ENCODE measurements at regions of chr6 and their contacts with region 1.

Region 1: DNA sequence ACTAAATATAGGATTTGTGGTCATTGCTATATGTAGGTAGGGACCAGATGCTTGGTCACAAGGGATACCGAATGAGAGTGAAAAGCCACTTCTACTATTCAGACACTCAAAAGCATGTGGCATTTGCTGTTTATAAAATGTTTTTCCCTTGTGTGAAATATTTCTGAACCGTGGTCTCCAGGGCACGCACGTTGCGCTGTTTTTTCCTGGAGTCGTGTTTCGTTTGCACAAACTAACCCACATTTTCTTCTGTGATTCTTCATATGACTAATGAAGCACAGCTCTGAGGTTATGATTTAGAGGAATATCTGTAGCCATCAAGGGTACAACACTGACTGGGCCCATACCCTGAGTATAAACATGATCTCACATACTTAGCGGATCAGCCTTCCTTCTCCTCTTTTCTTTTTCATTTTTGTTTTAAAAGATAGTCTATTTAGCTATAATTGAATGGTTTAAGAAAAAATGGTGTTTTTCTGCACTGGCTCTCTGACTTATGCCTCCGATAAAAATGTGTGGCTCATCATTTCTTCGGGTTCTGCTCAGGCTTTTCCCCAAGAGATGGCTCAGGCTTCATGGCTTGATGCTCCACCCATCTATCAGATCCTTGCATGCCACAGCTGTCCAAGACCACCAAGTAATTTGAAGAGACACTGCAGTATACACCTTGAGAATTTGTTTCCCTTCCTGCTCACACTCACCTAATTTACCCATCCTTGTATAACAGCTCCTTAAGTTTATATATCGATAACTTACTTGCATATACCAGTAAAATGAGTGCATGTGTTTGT is 59.9 kb upstream of the HBS1L start:
- DNase-seq: peak; percentile 75
- H3K4me3 Mint-ChIP-seq: no peak overlapping the region
- H3K27ac Mint-ChIP-seq: peak overlapping the region; percentile 74
- H3K4me1 Mint-ChIP-seq: peaks cover 72% of the 10 kb centered on the region
- H3K27me3 Mint-ChIP-seq: no peaks in the 10 kb centered on the region

Region 2: GRCh38 chr6:133724726-133725125 is 1389.8 kb before region 1 on chr6:
- CTCF ChIA-PET with region 1: no interaction called
- intact Hi-C with region 1: no loop called
- DNase-seq: no peak
- H3K4me3 Mint-ChIP-seq: no peak overlapping the region
- H3K27ac Mint-ChIP-seq: no peak overlapping the region
- H3K4me1 Mint-ChIP-seq: no peaks in the 10 kb centered on the region
- H3K27me3 Mint-ChIP-seq: no peaks in the 10 kb centered on the region

Region 3: DNA sequence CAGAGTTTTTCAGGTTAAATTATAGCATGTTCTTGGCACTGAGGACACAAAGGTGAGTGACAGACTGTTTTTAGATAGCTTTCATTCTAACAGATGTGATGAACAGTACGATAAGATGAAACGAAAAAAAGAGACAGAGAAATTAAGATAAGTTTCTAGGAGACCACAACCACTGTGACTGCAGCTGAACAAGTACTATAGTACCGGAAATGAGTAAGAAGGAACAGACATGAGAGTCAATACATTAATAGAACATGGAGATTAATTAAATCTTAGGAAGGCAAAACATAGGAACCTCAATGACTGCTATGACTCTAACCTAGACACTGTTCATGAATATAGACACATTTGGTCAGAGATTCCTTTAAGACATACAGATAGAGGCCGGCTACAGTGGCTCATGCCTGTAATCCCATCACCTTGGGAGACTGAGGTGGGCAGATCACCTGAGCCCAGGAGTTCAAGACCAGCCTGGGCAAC is 100.2 kb before region 1 on chr6:
- CTCF ChIA-PET with region 1: no interaction called
- intact Hi-C with region 1: loop called (anchors 1 kb)
- DNase-seq: peak; percentile 24
- H3K4me3 Mint-ChIP-seq: peak overlapping the region; percentile 2
- H3K27ac Mint-ChIP-seq: no peak overlapping the region
- H3K4me1 Mint-ChIP-seq: peaks cover 60% of the 10 kb centered on the region
- H3K27me3 Mint-ChIP-seq: no peaks in the 10 kb centered on the region

Region 4: GRCh38 chr6:135030056-135030473 is 84.5 kb before region 1 on chr6:
- CTCF ChIA-PET with region 1: no interaction called
- intact Hi-C with region 1: loop called (anchors 1 kb)
- DNase-seq: peak; percentile 18
- H3K4me3 Mint-ChIP-seq: peak overlapping the region; percentile 10
- H3K27ac Mint-ChIP-seq: peak overlapping the region; percentile 71
- H3K4me1 Mint-ChIP-seq: peaks cover 63% of the 10 kb centered on the region
- H3K27me3 Mint-ChIP-seq: no peaks in the 10 kb centered on the region

Region 5: DNA sequence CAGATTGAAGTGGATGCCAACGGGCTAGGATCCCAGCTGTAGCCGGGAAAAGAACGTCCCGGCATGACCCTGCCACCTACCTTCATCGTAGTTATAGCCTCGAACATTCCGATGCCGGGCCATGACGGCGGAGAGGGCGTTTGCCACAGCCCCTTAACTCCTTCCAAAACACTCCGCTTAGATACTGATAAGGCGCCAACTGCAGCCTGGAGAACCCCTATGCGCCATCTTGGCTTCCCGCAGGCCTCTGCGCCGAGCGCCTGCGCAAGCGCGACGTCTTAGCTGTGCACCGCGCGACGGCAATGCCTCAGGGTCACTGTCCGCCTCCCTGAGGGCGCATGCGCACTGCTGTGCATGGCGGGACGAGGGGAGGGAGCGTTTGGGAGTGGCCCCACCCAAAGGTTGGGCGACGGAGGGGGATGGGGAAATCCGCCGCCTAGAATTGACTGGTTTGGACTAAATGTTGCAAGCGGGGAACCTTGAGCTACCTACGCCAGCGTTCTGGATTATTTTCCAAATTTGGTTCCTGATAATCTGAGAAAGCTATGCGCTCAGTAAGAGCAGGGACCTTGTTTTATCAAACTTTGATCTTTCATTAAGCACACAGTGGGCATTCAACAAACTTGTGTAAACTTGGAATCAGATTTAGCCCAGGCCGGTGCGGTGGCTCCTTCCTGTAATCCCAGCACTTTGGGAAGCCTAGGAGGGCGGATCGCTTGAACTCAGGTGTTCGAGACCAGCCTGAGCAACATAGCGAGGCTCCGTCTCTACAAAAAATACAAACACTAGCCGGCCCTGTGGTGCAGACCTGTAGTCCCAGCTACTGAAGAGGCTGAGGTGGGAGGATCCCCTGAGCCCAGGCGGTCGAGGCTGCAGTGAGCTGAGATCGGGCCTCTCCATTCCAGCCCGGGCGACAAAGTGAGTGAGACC is 59.7 kb before region 1 on chr6 and contains the start of gene HBS1L:
- CTCF ChIA-PET with region 1: interaction called, 3 read pairs
- intact Hi-C with region 1: loop called (anchors 1 kb)
- DNase-seq: peak; percentile 98
- H3K4me3 Mint-ChIP-seq: peak within 1 kb of the TSS; percentile 90
- H3K27ac Mint-ChIP-seq: peak within 1 kb of the TSS; percentile 96
- H3K4me1 Mint-ChIP-seq: peaks cover 23% of the 10 kb centered on the region
- H3K27me3 Mint-ChIP-seq: no peaks in the 10 kb centered on the region
- total RNA-seq, gene HBS1L: 150 to 153 TPM

Region 6: GRCh38 chr6:135094403-135094848 is 20.1 kb before region 1 on chr6:
- CTCF ChIA-PET with region 1: interaction called, 5 read pairs
- intact Hi-C with region 1: loop called (anchors 1 kb)
- DNase-seq: peak; percentile 59
- H3K4me3 Mint-ChIP-seq: no peak overlapping the region
- H3K27ac Mint-ChIP-seq: peak overlapping the region; percentile 71
- H3K4me1 Mint-ChIP-seq: peaks cover 56% of the 10 kb centered on the region
- H3K27me3 Mint-ChIP-seq: no peaks in the 10 kb centered on the region

Region 7: GRCh38 chr6:135145063-135145800 is 30.7 kb after region 1 on chr6:
- CTCF ChIA-PET with region 1: interaction called, 5 read pairs
- intact Hi-C with region 1: loop called (anchors 1 kb)
- DNase-seq: no peak
- H3K4me3 Mint-ChIP-seq: no peak overlapping the region
- H3K27ac Mint-ChIP-seq: peak overlapping the region; percentile 76
- H3K4me1 Mint-ChIP-seq: peaks cover 51% of the 10 kb centered on the region
- H3K27me3 Mint-ChIP-seq: no peaks in the 10 kb centered on the region

Region 8: GRCh38 chr6:135170849-135171248 is 56.3 kb after region 1 on chr6:
- CTCF ChIA-PET with region 1: no interaction called
- intact Hi-C with region 1: loop called (anchors 1 kb)
- DNase-seq: peak; percentile 65
- H3K4me3 Mint-ChIP-seq: no peak overlapping the region
- H3K27ac Mint-ChIP-seq: peak overlapping the region; percentile 88
- H3K4me1 Mint-ChIP-seq: peaks cover 17% of the 10 kb centered on the region
- H3K27me3 Mint-ChIP-seq: no peaks in the 10 kb centered on the region

Measured in activated naive CD4-positive, alpha-beta T cell treated with anti-CD3 and anti-CD28 coated beads for 36 hours (primary cell).